ENCODE measurements at regions of chr14 and their contacts with region 1.

Region 1: DNA sequence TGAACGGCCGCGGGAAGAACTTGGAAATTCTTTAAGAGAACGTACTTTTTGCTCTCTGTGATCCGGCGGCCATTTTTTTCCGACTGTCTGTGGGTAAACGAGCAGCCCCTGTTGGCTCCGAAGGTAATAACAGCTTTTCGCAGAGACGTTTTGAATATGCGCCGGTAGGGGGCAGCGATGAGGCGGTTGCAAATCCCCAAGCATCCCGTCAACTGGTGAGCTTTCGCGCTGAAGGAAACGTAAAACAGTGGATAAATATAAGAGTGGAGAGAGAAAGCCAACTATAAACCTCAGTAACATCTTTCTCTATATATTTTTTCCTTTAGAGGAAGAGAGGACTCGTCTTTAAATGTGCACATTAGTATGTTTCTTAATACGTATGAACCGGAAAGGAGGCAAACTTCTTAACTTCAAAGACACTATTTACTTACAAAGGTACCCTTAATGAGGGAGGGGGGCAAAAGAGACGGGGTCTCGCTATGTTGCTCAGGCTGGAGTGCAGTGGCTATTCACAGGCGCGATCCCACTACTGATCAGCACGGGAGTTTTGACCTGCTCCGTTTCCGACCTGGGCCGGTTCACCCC is 9.6 kb upstream of the NEMF start:
- DNase-seq: peak; percentile 77 to 84
- H3K4me3 ChIP-seq: peak overlapping the region; percentile 69
- H3K4me3 Mint-ChIP-seq: no peak overlapping the region
- H3K27ac Mint-ChIP-seq: no peak overlapping the region
- H3K4me1 ChIP-seq: peaks cover 5% of the 10 kb centered on the region; the same call in 1 of the 2 replicates
- H3K4me1 Mint-ChIP-seq: peaks cover 11% of the 10 kb centered on the region
- H3K27me3 ChIP-seq: no peaks in the 10 kb centered on the region
- H3K27me3 Mint-ChIP-seq: peaks cover 3% of the 10 kb centered on the region
- CTCF ChIP-seq: peak; percentile 100

Region 2: GRCh38 chr14:50060871-50061663 is 198.9 kb after region 1 on chr14:
- CTCF ChIA-PET with region 1: interaction called, 10 read pairs
- POLR2A ChIA-PET with region 1: interaction called, 8 read pairs
- intact Hi-C with region 1: loop called (anchors 1 kb)
- DNase-seq: peak; percentile 74 to 75
- H3K4me3 ChIP-seq: no peak overlapping the region
- H3K4me3 Mint-ChIP-seq: no peak overlapping the region
- H3K27ac Mint-ChIP-seq: peak overlapping the region; percentile 89
- H3K4me1 ChIP-seq: peaks cover 76% of the 10 kb centered on the region
- H3K4me1 Mint-ChIP-seq: peaks cover 26% of the 10 kb centered on the region
- H3K27me3 ChIP-seq: no peaks in the 10 kb centered on the region
- H3K27me3 Mint-ChIP-seq: no peaks in the 10 kb centered on the region
- CTCF ChIP-seq: peak; percentile 9 to 28

Region 3: DNA sequence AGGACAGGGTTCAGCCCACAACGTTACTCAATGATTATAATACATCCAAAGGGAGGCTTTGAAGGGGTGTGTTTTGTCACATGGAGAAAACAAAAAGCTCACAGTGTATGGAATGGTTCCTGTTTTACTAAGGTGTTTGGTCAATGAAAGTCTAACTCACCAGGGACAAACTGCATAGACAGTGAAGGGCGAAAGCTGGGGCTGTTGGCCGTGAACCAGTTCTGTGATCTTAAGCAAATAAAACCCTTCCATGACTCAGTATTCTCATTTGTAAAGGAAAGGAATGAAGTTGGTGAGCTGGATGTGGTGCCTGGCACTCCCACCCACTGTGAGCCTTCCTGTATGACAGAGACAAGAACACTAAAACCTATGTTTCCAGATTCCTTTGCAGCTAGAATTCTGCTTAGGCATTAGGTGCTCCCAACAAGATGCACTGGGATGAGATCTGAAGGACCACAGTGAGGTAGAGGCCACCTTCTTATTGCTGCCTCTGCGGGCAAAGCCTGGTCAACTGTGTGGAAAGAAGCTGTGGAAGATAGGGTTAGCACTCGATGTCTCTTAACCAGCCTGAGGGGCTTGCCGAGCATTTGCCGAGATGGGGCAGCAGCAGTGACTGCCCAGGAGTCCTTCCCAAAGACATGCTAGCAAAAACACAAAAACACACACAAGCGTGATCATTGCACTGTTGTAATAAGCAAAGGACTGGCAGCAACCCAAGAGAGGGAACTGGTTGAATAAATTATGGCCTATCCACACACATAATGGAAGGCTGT is 205.7 kb after region 1 on chr14:
- CTCF ChIA-PET with region 1: interaction called, 10 read pairs
- POLR2A ChIA-PET with region 1: interaction called, 10 read pairs
- intact Hi-C with region 1: no loop called
- DNase-seq: no peak
- H3K4me3 ChIP-seq: no peak overlapping the region
- H3K4me3 Mint-ChIP-seq: no peak overlapping the region
- H3K27ac Mint-ChIP-seq: peak overlapping the region; percentile 78
- H3K4me1 ChIP-seq: peaks cover 55% of the 10 kb centered on the region
- H3K4me1 Mint-ChIP-seq: peaks cover 32% of the 10 kb centered on the region
- H3K27me3 ChIP-seq: no peaks in the 10 kb centered on the region
- H3K27me3 Mint-ChIP-seq: no peaks in the 10 kb centered on the region
- CTCF ChIP-seq: no peak

Region 4: DNA sequence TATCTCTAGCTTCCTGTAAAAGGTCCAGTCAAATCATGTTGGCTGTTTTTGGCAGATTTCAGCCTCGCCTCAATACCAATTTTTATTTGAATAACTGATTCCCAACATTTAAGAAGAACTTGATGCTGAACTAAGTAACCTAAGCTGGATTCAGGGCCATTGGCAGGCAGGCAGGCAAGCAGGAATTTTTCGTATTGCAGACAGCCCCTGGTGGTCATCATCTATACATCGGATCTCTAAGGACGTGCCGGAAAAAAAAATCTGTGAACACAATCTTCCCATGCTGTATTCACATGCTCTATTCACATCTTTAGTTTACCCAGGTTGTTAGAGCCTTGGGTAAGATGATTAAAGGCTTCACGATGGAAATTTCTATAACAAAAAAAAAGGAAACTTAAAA is 247.2 kb after region 1 on chr14:
- CTCF ChIA-PET with region 1: interaction called, 12 read pairs
- POLR2A ChIA-PET with region 1: interaction called, 13 read pairs
- intact Hi-C with region 1: loop called (anchors 1 kb)
- DNase-seq: peak in 1 of 2 experiments; percentile 40
- H3K4me3 ChIP-seq: no peak overlapping the region
- H3K4me3 Mint-ChIP-seq: no peak overlapping the region
- H3K27ac Mint-ChIP-seq: no peak overlapping the region
- H3K4me1 ChIP-seq: peaks cover 3% of the 10 kb centered on the region; the same call in 1 of the 2 replicates
- H3K4me1 Mint-ChIP-seq: no peaks in the 10 kb centered on the region
- H3K27me3 ChIP-seq: no peaks in the 10 kb centered on the region
- H3K27me3 Mint-ChIP-seq: no peaks in the 10 kb centered on the region
- CTCF ChIP-seq: peak; percentile 50 to 57

Region 5: GRCh38 chr14:50311975-50312733 is 450.0 kb after region 1 on chr14 and contains the starts of genes DMAC2L and L2HGDH:
- CTCF ChIA-PET with region 1: no interaction called
- POLR2A ChIA-PET with region 1: no interaction called
- intact Hi-C with region 1: loop called (anchors 5 kb)
- DNase-seq: peak; percentile 94 to 96
- H3K4me3 ChIP-seq: peak within 1 kb of the TSS; percentile 78
- H3K4me3 Mint-ChIP-seq: peak within 1 kb of the TSS; percentile 87
- H3K27ac Mint-ChIP-seq: peak within 1 kb of the TSS; percentile 92
- H3K4me1 ChIP-seq: 0 out of 2 replicates have a peak, but pooled peaks cover 5% of the 10 kb centered on the region
- H3K4me1 Mint-ChIP-seq: peaks cover 7% of the 10 kb centered on the region
- H3K27me3 ChIP-seq: no peaks in the 10 kb centered on the region
- H3K27me3 Mint-ChIP-seq: no peaks in the 10 kb centered on the region
- CTCF ChIP-seq: peak in 1 of 2 experiments; percentile 7
- total RNA-seq, gene DMAC2L: 25.8 and 27.6 TPM in 2 replicates
- total RNA-seq, gene L2HGDH: 25.0 and 27.6 TPM in 2 replicates